ENCODE measurements at regions of chr21 and their contacts with region 1.

Region 1: GRCh38 chr21:38798481-38798882 is 7.2 kb upstream of the ETS2 start:
- DNase-seq: no peak
- ATAC-seq: no peak
- H3K4me3 ChIP-seq: no peak overlapping the region
- H3K27ac ChIP-seq: no peak overlapping the region
- H3K4me1 ChIP-seq: peaks cover 0 to 5% (median 0%) of the 10 kb centered on the region in 12 donors
- H3K27me3 ChIP-seq: no peaks in the 10 kb centered on the region
- CTCF ChIP-seq: no peak
- POLR2A ChIP-seq: no peak

Region 2: GRCh38 chr21:38743761-38744529 is 54.5 kb before region 1 on chr21:
- intact Hi-C with region 1: loop called in 4 of 10 experiments (anchors 5 to 10 kb)
- DNase-seq: peak in 2 of 5 donors; percentile 32 to 62
- ATAC-seq: peak; percentile 39 to 95 (median 64)
- H3K4me3 ChIP-seq: peak overlapping the region in 5 of 12 donors; percentile 2 to 24 (median 16)
- H3K27ac ChIP-seq: peak overlapping the region in 9 of 12 donors; percentile 10 to 62 (median 46)
- H3K4me1 ChIP-seq: peaks cover 0 to 20% (median 0%) of the 10 kb centered on the region in 12 donors
- H3K27me3 ChIP-seq: no peaks in the 10 kb centered on the region
- CTCF ChIP-seq: no peak
- POLR2A ChIP-seq: no peak

Region 3: DNA sequence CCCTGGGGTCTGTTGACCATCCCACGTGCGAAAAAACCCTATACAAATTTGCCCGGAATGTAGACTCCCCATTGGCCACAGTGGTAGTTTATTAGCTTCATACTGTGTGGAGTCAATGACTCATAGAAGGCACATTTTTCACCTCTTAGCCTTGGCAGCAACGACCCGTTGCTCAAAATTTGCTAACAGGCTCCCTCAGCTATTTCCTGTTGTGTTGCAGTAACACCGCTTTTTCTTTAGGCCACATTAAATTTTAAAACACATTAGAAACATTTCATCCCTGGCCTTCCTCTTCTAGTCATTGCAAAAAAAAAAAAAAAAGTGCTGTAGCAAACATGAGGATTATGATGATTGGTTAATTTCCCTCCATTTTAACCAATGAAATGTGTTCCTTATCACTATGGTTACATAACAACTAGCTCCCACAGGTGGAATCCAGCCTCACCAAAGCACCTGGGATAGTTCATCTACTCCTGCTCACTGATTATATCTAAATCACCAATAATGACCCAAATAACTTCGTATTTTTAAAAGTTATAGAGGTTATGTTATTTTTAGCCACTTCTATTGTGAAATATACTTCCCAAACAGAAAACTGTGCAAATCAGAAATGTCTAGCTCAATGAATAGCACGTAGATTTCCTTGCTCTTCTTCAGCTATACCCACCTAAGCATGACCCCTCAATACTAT is 42.7 kb before region 1 on chr21:
- intact Hi-C with region 1: loop called in 3 of 10 experiments (anchors 5 kb)
- DNase-seq: peak in 1 of 5 donors; percentile 26
- ATAC-seq: peak; percentile 28 to 80 (median 74)
- H3K4me3 ChIP-seq: no peak overlapping the region
- H3K27ac ChIP-seq: peak overlapping the region in 5 of 12 donors; percentile 6 to 63 (median 32)
- H3K4me1 ChIP-seq: peaks cover 0 to 78% (median 14%) of the 10 kb centered on the region in 12 donors
- H3K27me3 ChIP-seq: no peaks in the 10 kb centered on the region
- CTCF ChIP-seq: no peak
- POLR2A ChIP-seq: no peak

Region 4: GRCh38 chr21:39483924-39484323 is 685.4 kb after region 1 on chr21:
- intact Hi-C with region 1: no loop called
- DNase-seq: no peak
- ATAC-seq: peak in 1 of 4 donors; percentile 51
- H3K4me3 ChIP-seq: no peak overlapping the region
- H3K27ac ChIP-seq: no peak overlapping the region
- H3K4me1 ChIP-seq: peaks cover 0 to 17% (median 3%) of the 10 kb centered on the region in 12 donors
- H3K27me3 ChIP-seq: no peaks in the 10 kb centered on the region
- CTCF ChIP-seq: no peak
- POLR2A ChIP-seq: no peak